ENCODE measurements at regions of chr19 and their contacts with region 1.

Region 1: GRCh38 chr19:36605101-36605876 is at the start of gene ZNF382:
- DNase-seq: peak; percentile 86

Region 2: GRCh38 chr19:36573020-36573885 is 32.0 kb before region 1 on chr19 and contains the start of gene ZNF529:
- CTCF ChIA-PET with region 1: no interaction called
- POLR2A ChIA-PET with region 1: interaction called, 13 read pairs
- DNase-seq: peak; percentile 83

Measured in HEK293T (cell line).